Mammary epithelial cell (primary cell): ENCODE measurements at regions of chr15 and their contacts with region 1.

Region 1: DNA sequence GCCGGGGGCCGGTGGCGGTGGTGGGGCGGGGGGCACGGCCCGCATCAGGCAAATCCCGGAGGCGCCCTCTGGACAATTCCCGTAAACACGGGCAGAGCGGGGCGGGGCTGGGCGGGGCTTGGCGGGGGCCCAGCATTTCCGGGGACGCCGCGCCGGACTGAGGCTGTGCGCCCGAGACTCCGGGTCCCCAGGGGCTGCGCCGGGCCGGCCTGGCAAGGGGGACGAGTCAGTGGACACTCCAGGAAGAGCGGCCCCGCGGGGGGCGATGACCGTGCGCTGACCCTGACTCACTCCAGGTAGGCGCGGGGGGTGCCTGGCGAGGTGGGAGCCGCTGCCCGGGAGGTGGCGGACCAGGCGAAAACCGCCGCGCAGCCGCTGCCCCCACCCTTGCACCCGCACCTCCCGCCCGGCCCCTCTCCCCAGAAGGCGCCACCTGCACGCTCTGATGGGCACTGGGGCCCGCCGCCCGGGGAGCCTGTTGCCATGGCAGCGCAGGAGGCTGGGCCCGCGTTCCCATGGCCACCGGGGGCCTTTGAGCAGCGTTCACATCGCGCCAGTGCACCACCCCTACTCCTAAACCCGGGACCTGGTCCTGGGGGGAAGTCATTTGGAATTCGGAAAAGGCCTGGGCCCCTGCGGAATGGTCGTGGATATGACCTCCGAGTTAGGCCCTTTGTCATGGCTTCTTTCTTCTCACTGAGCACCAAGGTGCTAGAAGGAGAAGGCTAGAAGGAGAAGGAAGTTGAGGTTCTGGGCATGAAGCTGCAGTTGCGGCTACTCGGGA is 16.2 kb upstream of the SEMA4B start:
- DNase-seq: peak; percentile 72
- H3K4me3 ChIP-seq: peak overlapping the region; percentile 38 to 83 (median 72)
- H3K27ac ChIP-seq: peak overlapping the region; percentile 44
- H3K4me1 ChIP-seq: peaks cover 19% of the 10 kb centered on the region
- H3K27me3 ChIP-seq: no peaks in the 10 kb centered on the region
- CTCF ChIP-seq: no peak

Region 2: GRCh38 chr15:90114451-90114901 is 70.5 kb before region 1 on chr15:
- CTCF ChIA-PET with region 1: no interaction called
- dilution Hi-C with region 1: no loop called
- in situ Hi-C with region 1: no loop called
- intact Hi-C with region 1: no loop called
- DNase-seq: no peak
- H3K4me3 ChIP-seq: no peak overlapping the region
- H3K27ac ChIP-seq: no peak overlapping the region
- H3K4me1 ChIP-seq: no peaks in the 10 kb centered on the region
- H3K27me3 ChIP-seq: no peaks in the 10 kb centered on the region
- CTCF ChIP-seq: no peak

Region 3: DNA sequence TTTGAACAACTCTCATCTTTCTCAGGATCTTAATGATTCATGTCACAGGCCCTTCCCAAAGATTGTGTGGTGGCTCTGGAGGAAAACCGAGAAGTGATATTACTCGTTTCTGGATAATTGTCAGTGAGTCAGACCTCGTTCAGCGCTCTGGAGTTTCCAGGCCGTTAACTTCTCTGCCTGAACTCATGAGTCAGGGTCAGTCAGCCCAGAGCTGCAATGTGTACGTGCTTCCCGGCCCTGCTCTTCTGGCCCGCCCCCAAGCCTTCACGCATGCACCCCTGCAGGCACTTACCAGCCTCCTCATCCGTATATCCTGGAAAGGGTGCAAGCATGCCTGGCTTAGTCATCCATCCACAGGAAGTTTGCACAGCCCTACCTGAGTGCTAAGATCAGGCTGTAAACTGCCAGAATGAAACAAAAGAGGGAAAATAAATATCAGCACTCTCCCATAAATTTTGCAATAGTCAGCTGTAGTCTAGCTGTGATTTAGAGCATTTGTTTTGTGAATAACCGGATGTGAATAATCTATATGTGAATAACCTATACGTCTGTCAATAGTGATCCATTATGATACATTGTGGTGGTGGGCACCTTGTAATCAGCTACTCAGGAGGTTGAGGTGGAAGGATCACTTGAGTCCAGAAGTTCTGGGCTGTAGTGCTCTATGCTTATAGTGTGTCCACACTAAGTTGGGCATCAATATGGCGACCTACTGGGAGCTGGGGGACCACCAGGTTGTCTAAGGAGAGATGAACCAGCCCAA is 19.1 kb before region 1 on chr15:
- CTCF ChIA-PET with region 1: no interaction called
- dilution Hi-C with region 1: no loop called
- in situ Hi-C with region 1: no loop called
- intact Hi-C with region 1: loop called (anchors 2 kb)
- DNase-seq: peak; percentile 100
- H3K4me3 ChIP-seq: no peak overlapping the region
- H3K27ac ChIP-seq: peak overlapping the region; percentile 71
- H3K4me1 ChIP-seq: peaks cover 39% of the 10 kb centered on the region
- H3K27me3 ChIP-seq: no peaks in the 10 kb centered on the region
- CTCF ChIP-seq: no peak

Region 4: GRCh38 chr15:90214553-90215196 is 29.7 kb after region 1 on chr15:
- CTCF ChIA-PET with region 1: interaction called, 3 read pairs
- dilution Hi-C with region 1: no loop called
- in situ Hi-C with region 1: no loop called
- intact Hi-C with region 1: loop called (anchors 2 kb)
- DNase-seq: no peak
- H3K4me3 ChIP-seq: no peak overlapping the region
- H3K27ac ChIP-seq: no peak overlapping the region
- H3K4me1 ChIP-seq: peaks cover 57% of the 10 kb centered on the region
- H3K27me3 ChIP-seq: no peaks in the 10 kb centered on the region
- CTCF ChIP-seq: peak; percentile 31 to 46

Region 5: DNA sequence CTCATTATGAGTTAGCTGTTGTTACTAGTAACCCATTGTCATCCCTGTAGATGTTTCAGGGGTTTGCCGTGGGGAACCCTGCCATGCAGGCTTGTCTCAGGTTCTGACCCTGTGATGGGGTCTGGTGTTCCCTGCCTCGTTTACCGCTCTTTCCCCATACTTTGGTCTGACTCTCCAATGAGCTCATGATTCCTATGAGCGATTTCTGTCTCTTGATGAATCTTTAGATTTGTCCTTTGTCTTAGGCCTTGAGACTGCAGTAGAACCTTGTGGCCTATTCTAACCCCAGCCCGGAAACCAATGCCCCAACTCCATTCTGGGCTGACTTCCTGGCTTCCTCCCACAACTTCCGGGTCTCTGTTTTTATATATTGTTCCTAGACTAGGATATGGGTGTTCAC is 191.8 kb after region 1 on chr15:
- CTCF ChIA-PET with region 1: no interaction called
- dilution Hi-C with region 1: no loop called
- in situ Hi-C with region 1: no loop called
- intact Hi-C with region 1: no loop called
- DNase-seq: no peak
- H3K4me3 ChIP-seq: no peak overlapping the region
- H3K27ac ChIP-seq: no peak overlapping the region
- H3K4me1 ChIP-seq: no peaks in the 10 kb centered on the region
- H3K27me3 ChIP-seq: no peaks in the 10 kb centered on the region
- CTCF ChIP-seq: no peak